ENCODE measurements at regions of chr16 and their contacts with region 1.

Region 1: GRCh38 chr16:82439671-82440293 is 187.0 kb upstream of the CDH13 start:
- DNase-seq: peak in 1 of 2 experiments; percentile 47
- H3K4me3 ChIP-seq: no peak overlapping the region
- H3K4me3 Mint-ChIP-seq: no peak overlapping the region
- H3K27ac Mint-ChIP-seq: peak overlapping the region; percentile 24
- H3K4me1 ChIP-seq: peaks cover 17% of the 10 kb centered on the region
- H3K4me1 Mint-ChIP-seq: peaks cover 12% of the 10 kb centered on the region
- H3K27me3 ChIP-seq: no peaks in the 10 kb centered on the region; the same call in 1 of the 2 replicates
- H3K27me3 Mint-ChIP-seq: peaks cover 14% of the 10 kb centered on the region
- CTCF ChIP-seq: peak; percentile 15 to 54

Region 2: GRCh38 chr16:82368041-82368440 is 71.7 kb before region 1 on chr16:
- CTCF ChIA-PET with region 1: interaction called, 10 read pairs
- POLR2A ChIA-PET with region 1: no interaction called
- intact Hi-C with region 1: no loop called
- DNase-seq: peak; percentile 62
- H3K4me3 ChIP-seq: no peak overlapping the region
- H3K4me3 Mint-ChIP-seq: no peak overlapping the region
- H3K27ac Mint-ChIP-seq: no peak overlapping the region
- H3K4me1 ChIP-seq: no peaks in the 10 kb centered on the region
- H3K4me1 Mint-ChIP-seq: no peaks in the 10 kb centered on the region
- H3K27me3 ChIP-seq: no peaks in the 10 kb centered on the region; the same call in 1 of the 2 replicates
- H3K27me3 Mint-ChIP-seq: peaks cover 20% of the 10 kb centered on the region
- CTCF ChIP-seq: peak; percentile 46 to 63

Region 3: GRCh38 chr16:82464187-82464586 is 24.4 kb after region 1 on chr16:
- CTCF ChIA-PET with region 1: no interaction called
- POLR2A ChIA-PET with region 1: no interaction called
- intact Hi-C with region 1: no loop called
- DNase-seq: no peak
- H3K4me3 ChIP-seq: no peak overlapping the region
- H3K4me3 Mint-ChIP-seq: no peak overlapping the region
- H3K27ac Mint-ChIP-seq: no peak overlapping the region
- H3K4me1 ChIP-seq: no peaks in the 10 kb centered on the region
- H3K4me1 Mint-ChIP-seq: peaks cover 10% of the 10 kb centered on the region
- H3K27me3 ChIP-seq: no peaks in the 10 kb centered on the region
- H3K27me3 Mint-ChIP-seq: peaks cover 14% of the 10 kb centered on the region
- CTCF ChIP-seq: no peak